Activated CD4-positive, alpha-beta memory T cell treated with anti-CD3 and anti-CD28 coated beads for 36 hours (primary cell): ENCODE measurements at regions of chr19 and their contacts with region 1.

Region 1: GRCh38 chr19:52570000-52570861 is at the start of gene ZNF701:
- DNase-seq: peak; percentile 98
- H3K4me3 Mint-ChIP-seq: peak within 1 kb of the TSS; percentile 88
- H3K27ac Mint-ChIP-seq: peak within 1 kb of the TSS; percentile 92
- H3K4me1 Mint-ChIP-seq: peaks cover 31% of the 10 kb centered on the region
- H3K27me3 Mint-ChIP-seq: no peaks in the 10 kb centered on the region
- total RNA-seq, gene ZNF701: 19.9 to 22.7 TPM

Region 2: DNA sequence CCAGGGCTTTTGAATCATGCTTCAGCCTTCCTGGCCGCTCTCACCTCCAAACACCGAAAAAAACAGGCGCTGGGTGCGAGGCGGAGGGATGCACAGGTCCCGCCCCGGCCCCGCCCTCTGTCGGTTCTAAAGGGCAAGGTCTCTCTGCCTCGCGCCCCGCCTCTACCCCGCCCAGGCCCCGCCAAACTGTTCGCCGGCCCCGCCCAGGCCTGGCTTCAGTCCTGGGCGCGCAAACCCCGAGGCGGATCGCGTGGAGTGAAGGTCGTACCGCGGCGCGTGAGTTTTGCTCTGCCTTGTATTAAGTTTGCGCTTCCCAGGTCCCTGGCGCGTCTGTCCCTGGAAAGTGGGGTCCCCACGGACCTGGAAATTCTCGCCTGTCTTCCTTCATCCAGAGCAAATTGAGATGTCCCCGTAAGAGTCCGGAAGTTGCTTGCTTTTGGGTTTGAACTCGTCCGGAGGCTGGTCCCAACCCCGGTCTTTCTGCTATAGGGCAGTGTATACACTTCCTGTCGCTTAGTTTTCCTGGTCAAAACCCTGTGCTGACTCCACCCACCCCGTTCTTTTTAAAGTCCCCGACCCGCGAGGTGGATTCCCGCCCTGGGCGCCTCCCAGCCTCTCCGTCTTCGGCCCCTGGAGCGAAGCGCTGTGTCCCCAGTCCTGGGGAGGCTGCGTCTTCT is 34.3 kb before region 1 on chr19:
- CTCF ChIA-PET with region 1: no interaction called
- POLR2A ChIA-PET with region 1: no interaction called
- intact Hi-C with region 1: loop called (anchors 1 kb)
- DNase-seq: peak; percentile 96
- H3K4me3 Mint-ChIP-seq: peak overlapping the region; percentile 80
- H3K27ac Mint-ChIP-seq: peak overlapping the region; percentile 91
- H3K4me1 Mint-ChIP-seq: peaks cover 22% of the 10 kb centered on the region
- H3K27me3 Mint-ChIP-seq: no peaks in the 10 kb centered on the region

Region 3: GRCh38 chr19:52590728-52591127 is 20.5 kb after region 1 on chr19:
- CTCF ChIA-PET with region 1: no interaction called
- POLR2A ChIA-PET with region 1: no interaction called
- intact Hi-C with region 1: no loop called
- DNase-seq: peak; percentile 25
- H3K4me3 Mint-ChIP-seq: no peak overlapping the region
- H3K27ac Mint-ChIP-seq: no peak overlapping the region
- H3K4me1 Mint-ChIP-seq: no peaks in the 10 kb centered on the region
- H3K27me3 Mint-ChIP-seq: no peaks in the 10 kb centered on the region

Region 4: GRCh38 chr19:52601025-52601973 is 31.1 kb after region 1 on chr19:
- CTCF ChIA-PET with region 1: no interaction called
- POLR2A ChIA-PET with region 1: no interaction called
- intact Hi-C with region 1: loop called (anchors 2 kb)
- DNase-seq: peak; percentile 96
- H3K4me3 Mint-ChIP-seq: peak overlapping the region; percentile 83
- H3K27ac Mint-ChIP-seq: peak overlapping the region; percentile 58
- H3K4me1 Mint-ChIP-seq: peaks cover 14% of the 10 kb centered on the region
- H3K27me3 Mint-ChIP-seq: no peaks in the 10 kb centered on the region